Right ventricle myocardium inferior (tissue), 1 donor: ENCODE measurements at regions of chr20 and their contacts with region 1.

Region 1: GRCh38 chr20:19757487-19758132 is 448 bp upstream of the RIN2 start:
- DNase-seq: peak; percentile 94
- ATAC-seq: peak; percentile 87

Region 2: GRCh38 chr20:19628570-19629169 is 128.9 kb before region 1 on chr20:
- intact Hi-C with region 1: no loop called
- DNase-seq: no peak
- ATAC-seq: no peak

Region 3: DNA sequence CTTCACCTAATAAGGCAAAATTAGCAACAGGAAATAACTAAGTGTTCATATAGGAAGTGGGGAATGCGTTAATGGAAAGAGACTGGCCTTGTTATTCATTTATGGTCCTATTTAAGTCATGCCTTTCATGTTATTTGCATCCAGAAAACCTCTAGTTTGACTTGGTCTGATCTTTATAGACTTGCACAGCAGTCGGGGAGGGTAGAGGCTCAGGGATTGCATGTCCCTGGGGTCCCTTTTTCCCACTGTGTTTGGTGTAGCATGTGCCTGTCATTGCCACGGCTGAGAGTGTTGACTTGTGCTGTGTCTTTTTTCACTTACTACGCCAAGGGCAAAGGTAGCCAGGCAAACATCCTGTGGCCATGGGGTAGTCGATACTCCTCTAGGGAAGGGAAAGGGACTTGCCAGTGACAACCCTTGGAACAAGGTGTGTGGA is 105.0 kb before region 1 on chr20:
- intact Hi-C with region 1: no loop called
- DNase-seq: no peak
- ATAC-seq: no peak

Region 4: DNA sequence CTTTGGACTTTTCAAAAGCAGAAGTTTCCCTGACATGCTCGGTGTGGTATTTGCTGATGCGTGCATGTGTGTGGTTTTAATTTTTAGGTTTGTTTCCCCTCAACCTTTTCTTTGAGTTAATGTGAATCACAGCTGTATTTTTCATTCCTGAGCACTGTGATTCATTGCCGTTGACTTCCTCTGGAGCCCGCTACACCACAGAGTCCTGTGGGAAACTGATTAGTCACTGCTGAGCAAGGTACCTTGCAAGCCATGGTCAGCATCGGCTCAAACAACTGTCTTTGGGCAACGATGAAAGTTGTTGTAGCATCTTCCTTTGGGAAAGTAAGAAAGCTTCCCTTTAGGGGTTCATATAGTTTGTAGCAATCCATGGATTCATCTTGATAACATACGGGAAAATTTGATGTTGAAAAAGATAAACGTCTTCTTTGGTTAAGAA is 58.0 kb after region 1 on chr20:
- intact Hi-C with region 1: loop called (anchors 5 kb)
- DNase-seq: no peak
- ATAC-seq: peak; percentile 82

Region 5: GRCh38 chr20:20150241-20150640 is 392.6 kb after region 1 on chr20:
- intact Hi-C with region 1: no loop called
- DNase-seq: no peak
- ATAC-seq: no peak